AG04450 (cell line): ENCODE measurements at regions of chr5 and their contacts with region 1.

Region 1: GRCh38 chr5:59367791-59368394 is 525.6 kb downstream of the PDE4D start:
- DNase-seq: peak; percentile 36
- H3K4me3 ChIP-seq: no peak overlapping the region
- H3K27ac ChIP-seq: no peak overlapping the region
- H3K27me3 ChIP-seq: no peaks in the 10 kb centered on the region
- CTCF ChIP-seq: peak; percentile 88

Region 2: GRCh38 chr5:58706736-58707135 is 661.2 kb before region 1 on chr5:
- CTCF ChIA-PET with region 1: no interaction called
- POLR2A ChIA-PET with region 1: no interaction called
- DNase-seq: no peak
- H3K4me3 ChIP-seq: no peak overlapping the region
- H3K27ac ChIP-seq: no peak overlapping the region
- H3K27me3 ChIP-seq: no peaks in the 10 kb centered on the region
- CTCF ChIP-seq: no peak

Region 3: GRCh38 chr5:59180515-59180914 is 187.4 kb before region 1 on chr5:
- CTCF ChIA-PET with region 1: interaction called, 360 read pairs
- POLR2A ChIA-PET with region 1: no interaction called
- DNase-seq: no peak
- H3K4me3 ChIP-seq: no peak overlapping the region
- H3K27ac ChIP-seq: no peak overlapping the region
- H3K27me3 ChIP-seq: no peaks in the 10 kb centered on the region
- CTCF ChIP-seq: no peak

Region 4: GRCh38 chr5:59193616-59194319 is 174.1 kb before region 1 on chr5:
- CTCF ChIA-PET with region 1: interaction called, 360 read pairs
- POLR2A ChIA-PET with region 1: no interaction called
- DNase-seq: no peak
- H3K4me3 ChIP-seq: no peak overlapping the region
- H3K27ac ChIP-seq: no peak overlapping the region
- H3K27me3 ChIP-seq: no peaks in the 10 kb centered on the region
- CTCF ChIP-seq: no peak

Region 5: GRCh38 chr5:59218424-59219045 is 149.4 kb before region 1 on chr5:
- CTCF ChIA-PET with region 1: interaction called, 40 read pairs
- POLR2A ChIA-PET with region 1: no interaction called
- DNase-seq: no peak
- H3K4me3 ChIP-seq: no peak overlapping the region
- H3K27ac ChIP-seq: no peak overlapping the region
- H3K27me3 ChIP-seq: peaks cover 2% of the 10 kb centered on the region
- CTCF ChIP-seq: peak; percentile 37

Region 6: DNA sequence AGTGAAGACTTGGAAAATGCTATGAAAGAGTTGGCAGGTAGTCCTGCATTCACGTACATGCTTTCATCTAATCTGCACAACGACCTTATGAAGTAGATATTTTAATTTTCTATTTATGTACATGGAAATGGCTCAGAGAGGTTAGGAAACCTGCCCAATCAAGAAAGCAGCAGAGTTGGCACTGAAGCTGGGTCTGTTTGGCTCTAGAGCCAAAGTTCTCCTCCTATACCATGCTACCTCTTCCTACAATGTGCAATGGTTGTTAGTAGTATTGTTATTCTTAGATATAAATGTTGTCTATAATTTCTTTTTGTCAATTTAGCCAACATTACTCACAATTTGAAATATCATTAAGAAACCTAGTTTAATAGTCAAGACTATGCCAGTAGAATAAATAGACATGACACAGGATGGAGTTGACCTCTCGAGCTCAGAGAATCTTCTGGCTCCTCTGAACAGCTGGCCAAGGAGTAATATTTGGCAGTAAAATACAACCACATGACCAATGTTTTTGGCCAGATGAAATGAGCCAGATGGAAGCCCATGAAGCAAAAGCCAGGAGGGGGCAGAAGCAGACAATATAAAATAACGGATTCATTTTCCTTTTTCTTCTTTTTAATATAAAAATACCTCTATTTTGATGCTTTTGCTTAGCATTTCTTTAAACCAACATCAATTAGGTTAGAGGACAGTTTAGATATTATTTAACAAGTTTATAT is 16.7 kb before region 1 on chr5:
- CTCF ChIA-PET with region 1: interaction called, 65 read pairs
- POLR2A ChIA-PET with region 1: no interaction called
- DNase-seq: no peak
- H3K4me3 ChIP-seq: no peak overlapping the region
- H3K27ac ChIP-seq: no peak overlapping the region
- H3K27me3 ChIP-seq: no peaks in the 10 kb centered on the region
- CTCF ChIP-seq: no peak

Region 7: GRCh38 chr5:59380350-59380951 is 12.6 kb after region 1 on chr5:
- CTCF ChIA-PET with region 1: interaction called, 67 read pairs
- POLR2A ChIA-PET with region 1: no interaction called
- DNase-seq: peak; percentile 21
- H3K4me3 ChIP-seq: no peak overlapping the region
- H3K27ac ChIP-seq: no peak overlapping the region
- H3K27me3 ChIP-seq: no peaks in the 10 kb centered on the region
- CTCF ChIP-seq: peak; percentile 57